AG04450 (cell line): ENCODE measurements at regions of chr14 and their contacts with region 1.

Region 1: GRCh38 chr14:89146274-89146673 is 270.8 kb downstream of the FOXN3 start:
- DNase-seq: no peak
- H3K4me3 ChIP-seq: no peak overlapping the region
- H3K27ac ChIP-seq: no peak overlapping the region
- H3K27me3 ChIP-seq: peaks cover 2% of the 10 kb centered on the region
- CTCF ChIP-seq: no peak

Region 2: DNA sequence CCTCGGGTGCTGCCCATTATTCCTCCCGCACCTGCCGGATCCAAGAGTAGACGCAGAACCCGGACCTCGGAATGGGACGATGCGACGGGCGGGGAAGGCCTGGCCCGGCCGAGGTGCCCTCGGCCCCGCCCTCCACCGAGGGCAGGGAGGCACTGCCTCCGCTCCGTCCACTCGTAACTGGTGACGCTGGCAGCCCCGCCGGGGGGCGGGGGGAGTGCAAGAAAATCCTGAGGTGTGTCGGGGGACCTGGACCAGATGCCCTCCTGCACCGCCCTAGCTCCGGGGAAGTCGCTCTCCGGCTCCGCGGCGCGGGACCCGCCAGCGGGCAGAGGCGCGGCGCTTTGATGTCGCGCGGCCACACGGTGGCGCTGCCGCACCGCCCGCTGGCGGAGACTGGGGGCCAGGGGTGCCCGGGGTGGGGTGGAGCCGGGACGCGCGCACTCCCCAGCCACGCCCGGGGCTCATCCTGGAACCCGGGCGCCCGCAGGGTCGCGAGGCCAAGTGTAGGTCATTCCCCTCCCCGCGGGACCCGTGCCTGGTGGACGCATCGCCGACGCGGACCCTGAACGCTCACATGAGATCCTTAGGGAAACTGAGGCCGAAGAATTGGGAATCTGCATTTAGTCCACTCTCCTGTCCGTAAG is 119.1 kb before region 1 on chr14:
- CTCF ChIA-PET with region 1: no interaction called
- POLR2A ChIA-PET with region 1: interaction called, 12 read pairs
- DNase-seq: no peak
- H3K4me3 ChIP-seq: peak overlapping the region; percentile 71
- H3K27ac ChIP-seq: no peak overlapping the region
- H3K27me3 ChIP-seq: no peaks in the 10 kb centered on the region
- CTCF ChIP-seq: peak; percentile 60